WTC11 (cell line): ENCODE measurements at regions of chr6 and their contacts with region 1.

Region 1: DNA sequence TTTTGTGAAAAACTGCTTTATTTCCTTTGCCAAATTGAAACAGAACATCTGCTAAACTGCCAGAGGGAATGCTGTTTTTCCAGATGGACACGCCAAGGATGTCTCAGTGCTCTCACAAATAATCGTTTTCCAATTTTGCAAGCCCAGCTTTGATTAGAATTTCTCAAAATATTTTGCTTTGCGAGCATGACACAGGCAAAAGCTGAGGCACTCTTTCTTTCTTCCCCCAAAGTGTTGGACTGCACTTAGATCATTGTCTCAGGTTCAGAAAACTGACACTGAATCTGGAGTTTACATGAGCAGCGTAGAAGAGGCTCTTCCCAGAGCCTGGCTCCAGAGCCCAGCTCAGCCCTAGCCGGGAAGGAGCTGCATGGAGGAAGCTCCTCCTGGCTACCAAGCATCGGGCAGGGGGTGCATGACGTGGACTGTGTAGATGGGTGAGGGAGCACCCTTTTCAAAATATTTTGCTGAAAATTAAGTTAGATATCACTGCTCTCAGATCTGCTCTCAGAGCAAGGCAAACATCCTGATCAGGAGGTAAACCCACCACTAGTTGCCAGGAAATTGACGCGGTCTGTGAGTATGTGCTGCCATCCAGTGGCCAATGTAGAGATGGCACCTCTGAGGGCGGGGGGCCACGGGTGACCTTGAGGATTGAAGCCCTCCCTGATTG is 107.5 kb downstream of the SLC22A3 start:
- DNase-seq: peak; percentile 79
- ATAC-seq: peak; percentile 90
- H3K4me3 Mint-ChIP-seq: no peak overlapping the region
- H3K27ac Mint-ChIP-seq: no peak overlapping the region
- H3K4me1 Mint-ChIP-seq: peaks cover 7% of the 10 kb centered on the region
- H3K27me3 Mint-ChIP-seq: no peaks in the 10 kb centered on the region
- CTCF ChIP-seq: peak; percentile 89

Region 2: DNA sequence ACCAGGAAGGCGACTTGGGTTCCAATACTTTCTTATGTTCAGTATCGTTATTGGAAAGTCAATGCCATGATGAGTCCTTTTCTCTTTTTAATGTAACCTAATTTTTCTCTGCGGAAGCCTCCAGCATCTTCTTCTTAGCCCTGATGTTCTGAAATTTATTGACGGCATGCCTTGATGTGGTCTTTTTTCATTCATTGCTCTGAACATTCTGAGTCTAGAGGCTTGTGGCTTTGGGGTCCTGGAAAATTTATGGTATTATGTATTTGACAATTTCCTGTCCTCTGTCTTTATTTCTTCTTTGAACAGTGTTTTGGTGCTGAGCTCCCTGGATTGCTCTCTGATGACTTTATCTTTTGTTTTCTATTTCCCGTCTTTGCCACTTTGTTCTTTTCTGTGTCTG is 593.6 kb before region 1 on chr6:
- CTCF ChIA-PET with region 1: interaction called, 11 read pairs
- POLR2A ChIA-PET with region 1: no interaction called
- DNase-seq: no peak
- ATAC-seq: no peak
- H3K4me3 Mint-ChIP-seq: no peak overlapping the region
- H3K27ac Mint-ChIP-seq: no peak overlapping the region
- H3K4me1 Mint-ChIP-seq: no peaks in the 10 kb centered on the region
- H3K27me3 Mint-ChIP-seq: no peaks in the 10 kb centered on the region
- CTCF ChIP-seq: no peak

Region 3: DNA sequence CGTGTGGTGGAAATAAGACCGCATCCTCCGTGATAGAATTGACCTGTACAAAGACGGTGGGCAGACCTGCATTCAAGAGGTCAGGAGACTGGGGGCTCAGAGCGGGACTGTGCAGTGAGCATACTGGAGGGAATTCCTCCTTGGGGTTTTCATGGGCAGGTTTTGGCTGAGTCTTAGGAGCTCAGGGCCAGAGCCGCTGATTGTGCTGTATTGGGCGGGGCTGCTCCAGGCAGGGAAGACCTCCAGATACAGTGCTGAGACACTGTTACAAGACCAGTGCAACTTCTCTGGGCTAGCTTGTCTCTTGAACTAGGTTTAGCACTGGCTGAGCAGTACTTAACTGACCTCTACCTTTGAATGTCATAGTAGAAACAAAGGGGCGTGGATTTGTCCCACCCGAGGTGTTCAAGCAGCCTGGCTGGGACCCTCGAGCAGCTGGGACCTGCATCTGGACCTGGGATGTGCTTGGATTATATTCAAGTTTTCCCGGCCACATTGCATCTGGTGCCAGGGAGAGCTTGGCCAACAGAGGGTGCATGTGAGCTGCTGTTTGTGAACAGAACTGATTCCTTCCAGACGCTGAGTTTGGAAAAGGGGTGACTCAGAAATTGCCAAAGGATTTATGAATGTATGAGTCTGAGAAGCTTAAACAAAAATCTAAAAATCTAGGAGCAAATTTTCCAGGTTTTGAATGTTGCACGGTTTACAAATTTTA is 367.5 kb before region 1 on chr6:
- CTCF ChIA-PET with region 1: interaction called, 28 read pairs
- POLR2A ChIA-PET with region 1: no interaction called
- DNase-seq: peak; percentile 63
- ATAC-seq: peak; percentile 86
- H3K4me3 Mint-ChIP-seq: no peak overlapping the region
- H3K27ac Mint-ChIP-seq: peak overlapping the region; percentile 14; the same call in 1 of the 2 replicates
- H3K4me1 Mint-ChIP-seq: no peaks in the 10 kb centered on the region
- H3K27me3 Mint-ChIP-seq: no peaks in the 10 kb centered on the region
- CTCF ChIP-seq: peak; percentile 27; the same call in 1 of the 2 replicates

Region 4: GRCh38 chr6:160137989-160138835 is 317.5 kb before region 1 on chr6:
- CTCF ChIA-PET with region 1: interaction called, 22 read pairs
- POLR2A ChIA-PET with region 1: no interaction called
- DNase-seq: peak; percentile 66
- ATAC-seq: peak; percentile 14; the same call in 1 of the 2 replicates
- H3K4me3 Mint-ChIP-seq: no peak overlapping the region
- H3K27ac Mint-ChIP-seq: no peak overlapping the region
- H3K4me1 Mint-ChIP-seq: peaks cover 28% of the 10 kb centered on the region
- H3K27me3 Mint-ChIP-seq: peaks cover 24% of the 10 kb centered on the region
- CTCF ChIP-seq: peak; percentile 64

Region 5: GRCh38 chr6:160221423-160221822 is 234.3 kb before region 1 on chr6:
- CTCF ChIA-PET with region 1: interaction called, 25 read pairs
- POLR2A ChIA-PET with region 1: no interaction called
- DNase-seq: no peak
- ATAC-seq: peak; percentile 60
- H3K4me3 Mint-ChIP-seq: no peak overlapping the region
- H3K27ac Mint-ChIP-seq: peak overlapping the region; percentile 18; the same call in 1 of the 2 replicates
- H3K4me1 Mint-ChIP-seq: peaks cover 47% of the 10 kb centered on the region
- H3K27me3 Mint-ChIP-seq: no peaks in the 10 kb centered on the region; the same call in 1 of the 2 replicates
- CTCF ChIP-seq: no peak

Region 6: DNA sequence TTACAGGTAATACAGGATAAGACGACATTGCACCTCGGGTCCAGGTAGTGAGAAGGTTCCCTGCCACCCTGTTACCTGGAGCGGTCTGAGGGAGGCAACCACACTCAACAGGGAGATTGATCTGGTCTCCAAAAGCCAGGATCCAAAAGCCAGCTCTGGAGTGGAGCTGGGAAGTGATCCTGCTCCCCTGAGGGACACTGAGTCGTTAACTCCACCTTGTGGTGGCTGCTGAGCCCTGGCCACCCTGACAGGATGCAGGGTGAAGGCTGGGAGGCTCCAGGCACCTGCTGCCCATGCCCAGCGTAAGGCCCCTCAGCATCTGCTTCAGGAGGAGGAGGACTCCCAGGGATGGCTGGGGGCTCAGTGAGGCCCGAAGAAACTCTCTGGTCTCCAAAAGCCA is 158.4 kb before region 1 on chr6:
- CTCF ChIA-PET with region 1: interaction called, 11 read pairs
- POLR2A ChIA-PET with region 1: no interaction called
- DNase-seq: peak; percentile 54
- ATAC-seq: peak; percentile 85
- H3K4me3 Mint-ChIP-seq: no peak overlapping the region
- H3K27ac Mint-ChIP-seq: no peak overlapping the region
- H3K4me1 Mint-ChIP-seq: peaks cover 31% of the 10 kb centered on the region
- H3K27me3 Mint-ChIP-seq: no peaks in the 10 kb centered on the region; the same call in 1 of the 2 replicates
- CTCF ChIP-seq: no peak

Region 7: DNA sequence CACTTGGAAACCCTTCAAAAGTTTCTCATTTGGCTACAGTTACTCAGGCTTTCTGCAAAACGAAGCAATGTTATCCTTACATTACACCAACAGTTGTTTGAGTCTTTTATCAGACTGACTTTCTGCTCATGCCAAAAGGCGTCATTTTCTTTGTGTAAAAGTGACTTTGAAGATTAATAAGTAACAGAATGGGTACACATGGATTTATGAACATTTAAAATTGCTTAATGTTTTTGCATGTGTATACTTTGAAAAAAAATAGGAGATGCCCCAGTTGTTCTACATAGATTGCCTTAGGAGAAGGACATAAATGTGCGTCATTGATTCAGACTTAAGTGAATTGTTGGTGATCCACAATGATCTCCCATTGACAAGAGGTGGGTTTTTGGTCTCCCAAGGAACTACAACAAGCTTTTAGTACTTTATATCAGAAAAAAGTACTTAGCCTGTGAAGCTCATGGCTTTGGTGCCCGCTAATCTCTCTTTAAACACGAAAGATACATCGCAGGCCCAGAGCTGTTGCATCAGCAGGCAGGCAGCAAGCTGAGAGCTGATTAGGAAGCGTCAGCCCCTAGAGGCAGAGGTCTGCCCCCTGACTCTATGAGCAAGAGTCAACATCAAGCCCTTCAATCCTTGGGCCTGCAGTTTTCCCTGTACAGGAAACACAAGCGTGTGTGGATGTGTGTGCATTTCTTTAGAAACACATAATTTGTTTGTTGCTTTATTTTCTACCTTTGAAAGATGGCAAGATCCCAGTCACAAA is 61.6 kb before region 1 on chr6:
- CTCF ChIA-PET with region 1: interaction called, 12 read pairs
- POLR2A ChIA-PET with region 1: no interaction called
- DNase-seq: peak; percentile 20
- ATAC-seq: peak; percentile 95
- H3K4me3 Mint-ChIP-seq: no peak overlapping the region
- H3K27ac Mint-ChIP-seq: peak overlapping the region; percentile 88
- H3K4me1 Mint-ChIP-seq: peaks cover 8% of the 10 kb centered on the region
- H3K27me3 Mint-ChIP-seq: no peaks in the 10 kb centered on the region
- CTCF ChIP-seq: no peak